H1 (cell line): ENCODE measurements at regions of chr12 and their contacts with region 1.

Region 1: DNA sequence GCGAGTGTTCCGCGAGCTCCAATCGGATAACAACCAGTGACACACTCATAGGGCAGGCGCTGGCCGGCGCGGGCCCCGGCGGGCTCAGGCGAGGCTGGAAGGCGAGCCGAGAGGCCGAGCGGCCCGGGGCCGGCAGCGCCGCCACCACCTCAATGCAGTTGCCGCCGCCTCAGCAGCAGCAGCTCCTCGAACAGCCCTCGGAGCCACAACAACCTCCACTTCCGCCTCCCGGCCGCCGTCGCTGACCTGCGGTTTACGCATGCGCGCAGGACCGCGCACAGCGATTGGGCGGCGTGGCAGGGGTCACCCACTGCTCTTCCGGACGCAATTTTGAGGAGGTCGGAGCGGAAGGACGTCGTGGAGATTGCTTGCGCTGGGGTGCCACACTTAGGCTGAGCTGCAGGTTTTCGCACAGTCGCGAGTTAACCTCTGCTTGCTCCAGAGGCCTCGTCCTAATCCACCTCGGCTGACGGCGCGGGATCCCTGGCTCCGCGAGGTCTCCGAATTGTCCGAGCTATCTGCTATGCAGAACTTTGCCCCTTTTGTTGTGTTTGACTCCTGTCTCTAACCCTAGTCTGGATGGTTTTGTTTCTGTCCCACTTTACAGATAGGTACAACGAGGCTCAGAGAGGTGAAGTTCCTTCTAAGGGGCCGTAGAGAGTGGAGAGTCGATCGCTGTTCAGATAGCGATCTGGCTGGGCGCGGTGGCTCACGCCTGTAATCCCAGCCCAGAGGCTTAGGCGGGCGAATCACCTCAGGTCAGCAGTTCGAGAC is at the starts of genes ACAD10 and BRAP:
- DNase-seq: peak; percentile 80 to 96
- H3K4me3 ChIP-seq: peak within 1 kb of the TSS; percentile 70 to 97 (median 80)
- H3K27ac ChIP-seq: peak within 1 kb of the TSS; percentile 64
- H3K4me1 ChIP-seq: peaks cover 0 to 5% (median 0%) of the 10 kb centered on the region in 4 experiments; a peak in 1 of 7 replicates
- H3K27me3 ChIP-seq: no peaks in the 10 kb centered on the region
- CTCF ChIP-seq: no peak; a peak in 1 of 4 replicates
- EP300 ChIP-seq: no peak
- POLR2A ChIP-seq: peak; percentile 95 to 98
- RAD21 ChIP-seq: no peak
- total RNA-seq, gene ACAD10: 23.3 and 23.5 TPM in 2 replicates
- total RNA-seq, gene BRAP: 20.1 and 22.2 TPM in 2 replicates

Region 2: DNA sequence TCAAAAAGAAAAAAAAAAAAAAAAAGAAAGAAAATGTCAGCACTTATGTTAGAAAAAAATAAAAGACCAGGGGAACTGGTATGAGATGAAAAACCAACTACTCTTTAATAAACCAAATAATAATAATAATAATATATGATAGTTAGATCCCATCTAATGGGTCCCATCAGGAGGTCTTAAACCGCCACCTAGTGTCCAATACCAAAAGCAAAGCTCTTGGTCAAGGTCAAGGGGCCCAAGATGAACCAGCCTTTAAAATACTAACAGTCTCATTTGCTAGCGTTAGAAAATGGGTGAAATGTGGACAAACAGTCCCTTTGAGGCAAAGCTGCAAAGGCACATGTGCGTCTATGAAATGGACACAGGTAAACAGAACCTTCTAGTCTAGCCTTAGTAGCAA is 12.4 kb before region 1 on chr12:
- CTCF ChIA-PET with region 1: interaction called, 19 read pairs
- POLR2A ChIA-PET with region 1: interaction called, 8 read pairs
- DNase-seq: no peak
- H3K4me3 ChIP-seq: no peak overlapping the region
- H3K27ac ChIP-seq: no peak overlapping the region
- H3K4me1 ChIP-seq: no peaks in the 10 kb centered on the region
- H3K27me3 ChIP-seq: no peaks in the 10 kb centered on the region
- CTCF ChIP-seq: peak in 2 of 3 experiments; percentile 24 to 35; a peak in 2 of 4 replicates
- EP300 ChIP-seq: no peak
- POLR2A ChIP-seq: no peak
- RAD21 ChIP-seq: peak; percentile 62 to 67

Region 3: DNA sequence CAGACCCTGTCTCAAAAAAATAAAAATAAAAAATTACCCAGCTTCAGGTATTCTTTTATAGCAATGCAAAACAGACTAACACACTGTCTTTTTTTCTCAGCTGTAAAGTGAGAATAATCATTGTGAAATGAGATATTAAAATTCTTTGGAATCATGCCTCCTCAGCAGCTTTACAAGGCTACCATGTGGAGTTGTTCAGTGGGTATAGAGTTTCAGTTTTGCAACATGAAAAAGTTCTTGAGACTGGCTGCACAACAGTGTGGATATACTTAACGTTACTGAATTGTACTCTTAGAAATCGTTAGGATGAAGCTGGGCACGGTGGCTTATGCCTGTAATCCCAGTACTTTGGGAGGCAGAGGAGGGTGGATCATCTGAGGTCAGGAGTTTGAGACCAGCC is 140.4 kb after region 1 on chr12:
- CTCF ChIA-PET with region 1: no interaction called
- POLR2A ChIA-PET with region 1: no interaction called
- DNase-seq: no peak
- H3K4me3 ChIP-seq: no peak overlapping the region
- H3K27ac ChIP-seq: no peak overlapping the region
- H3K4me1 ChIP-seq: peaks cover 0 to 3% (median 0%) of the 10 kb centered on the region in 4 experiments; a peak in 1 of 7 replicates
- H3K27me3 ChIP-seq: no peaks in the 10 kb centered on the region
- CTCF ChIP-seq: no peak
- EP300 ChIP-seq: no peak
- POLR2A ChIP-seq: no peak
- RAD21 ChIP-seq: no peak